Endothelial cell of umbilical vein (primary cell): ENCODE measurements at regions of chr4 and their contacts with region 1.

Region 1: DNA sequence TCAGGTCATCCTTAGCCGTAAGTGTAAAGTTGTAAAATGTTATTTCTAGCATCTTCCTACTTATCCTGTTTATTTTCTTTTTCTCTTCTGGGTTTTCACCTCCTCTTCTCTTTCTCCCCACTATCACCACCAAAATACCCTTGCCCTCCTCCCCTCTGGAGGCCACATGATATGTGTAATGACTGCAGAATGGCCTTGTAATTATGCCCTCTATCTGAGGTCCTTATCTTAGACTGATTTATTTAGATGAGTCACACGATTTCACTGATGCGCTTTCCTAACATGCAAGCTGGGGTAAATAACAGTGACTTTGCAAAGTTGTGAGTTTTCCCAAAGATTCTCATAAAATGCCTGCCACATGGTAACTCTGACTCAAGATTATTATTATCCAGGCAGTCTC is 231.8 kb upstream of the GPRIN3 start:
- DNase-seq: peak; percentile 90
- H3K4me3 ChIP-seq: no peak overlapping the region
- H3K27ac ChIP-seq: peak overlapping the region; percentile 94
- H3K4me1 ChIP-seq: peaks cover 61% of the 10 kb centered on the region
- H3K27me3 ChIP-seq: no peaks in the 10 kb centered on the region
- CTCF ChIP-seq: no peak
- POLR2A ChIP-seq: no peak

Region 2: GRCh38 chr4:88928852-88929251 is 610.5 kb before region 1 on chr4:
- CTCF ChIA-PET with region 1: no interaction called
- POLR2A ChIA-PET with region 1: no interaction called
- dilution Hi-C with region 1: no loop called
- intact Hi-C with region 1: no loop called
- DNase-seq: no peak
- H3K4me3 ChIP-seq: no peak overlapping the region
- H3K27ac ChIP-seq: no peak overlapping the region
- H3K4me1 ChIP-seq: no peaks in the 10 kb centered on the region
- H3K27me3 ChIP-seq: no peaks in the 10 kb centered on the region
- CTCF ChIP-seq: no peak
- POLR2A ChIP-seq: no peak

Region 3: DNA sequence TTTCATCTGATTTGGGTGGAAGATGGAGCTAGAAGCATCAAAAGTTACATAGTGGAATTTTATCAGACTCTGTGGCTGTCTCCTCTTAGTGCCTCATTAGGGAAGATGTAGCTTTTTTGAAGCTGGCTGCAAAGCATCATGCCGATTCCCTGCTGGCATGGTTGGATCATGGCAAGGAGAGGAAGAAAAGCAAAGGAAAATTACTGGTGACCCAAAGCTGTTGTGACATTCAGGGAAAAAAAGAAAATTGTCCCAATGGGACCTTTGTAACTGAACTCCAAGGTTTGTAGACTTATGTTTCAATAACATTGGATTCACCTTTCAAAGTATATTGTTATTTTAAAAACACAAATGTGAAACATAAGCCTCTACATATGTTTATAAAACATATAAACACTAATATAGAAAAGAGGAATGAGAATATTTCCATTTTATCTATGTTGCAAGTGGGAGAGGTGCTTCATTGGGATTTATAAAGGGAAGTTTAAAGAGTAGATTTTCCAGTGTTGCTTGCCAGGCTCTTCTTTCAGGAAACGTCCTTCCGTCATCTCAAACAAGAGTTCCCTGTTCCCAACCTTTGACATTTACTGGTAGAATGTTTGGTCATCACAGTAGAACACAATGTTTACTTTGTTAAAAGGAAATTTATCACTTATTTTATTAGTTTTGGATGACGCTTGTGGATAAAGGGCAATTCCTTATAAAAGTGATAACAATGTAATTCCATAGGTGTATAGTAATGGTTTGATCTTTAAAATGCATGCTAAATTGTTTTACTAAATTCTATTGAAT is 41.7 kb before region 1 on chr4:
- CTCF ChIA-PET with region 1: interaction called, 7 read pairs
- POLR2A ChIA-PET with region 1: no interaction called
- dilution Hi-C with region 1: no loop called
- intact Hi-C with region 1: loop called (anchors 1 kb)
- DNase-seq: peak; percentile 94
- H3K4me3 ChIP-seq: no peak overlapping the region
- H3K27ac ChIP-seq: peak overlapping the region; percentile 95
- H3K4me1 ChIP-seq: peaks cover 39% of the 10 kb centered on the region
- H3K27me3 ChIP-seq: no peaks in the 10 kb centered on the region
- CTCF ChIP-seq: no peak
- POLR2A ChIP-seq: peak; percentile 44

Region 4: GRCh38 chr4:89549907-89550306 is 10.5 kb after region 1 on chr4:
- CTCF ChIA-PET with region 1: interaction called, 18 read pairs
- POLR2A ChIA-PET with region 1: no interaction called
- dilution Hi-C with region 1: no loop called
- intact Hi-C with region 1: loop called (anchors 1 kb)
- DNase-seq: peak; percentile 97
- H3K4me3 ChIP-seq: no peak overlapping the region
- H3K27ac ChIP-seq: peak overlapping the region; percentile 81
- H3K4me1 ChIP-seq: peaks cover 23% of the 10 kb centered on the region
- H3K27me3 ChIP-seq: no peaks in the 10 kb centered on the region
- CTCF ChIP-seq: no peak
- POLR2A ChIP-seq: no peak

Region 5: GRCh38 chr4:89860971-89861370 is 321.6 kb after region 1 on chr4:
- CTCF ChIA-PET with region 1: no interaction called
- POLR2A ChIA-PET with region 1: no interaction called
- dilution Hi-C with region 1: no loop called
- intact Hi-C with region 1: no loop called
- DNase-seq: no peak
- H3K4me3 ChIP-seq: no peak overlapping the region
- H3K27ac ChIP-seq: no peak overlapping the region
- H3K4me1 ChIP-seq: no peaks in the 10 kb centered on the region
- H3K27me3 ChIP-seq: no peaks in the 10 kb centered on the region
- CTCF ChIP-seq: no peak
- POLR2A ChIP-seq: no peak

Region 6: GRCh38 chr4:90084967-90085295 is 545.6 kb after region 1 on chr4:
- CTCF ChIA-PET with region 1: no interaction called
- POLR2A ChIA-PET with region 1: no interaction called
- dilution Hi-C with region 1: no loop called
- intact Hi-C with region 1: no loop called
- DNase-seq: no peak
- H3K4me3 ChIP-seq: no peak overlapping the region
- H3K27ac ChIP-seq: no peak overlapping the region
- H3K4me1 ChIP-seq: no peaks in the 10 kb centered on the region
- H3K27me3 ChIP-seq: peaks cover 0 to 1% of the 10 kb centered on the region in 2 experiments
- CTCF ChIP-seq: no peak
- POLR2A ChIP-seq: no peak